ENCODE measurements at regions of chr11 and their contacts with region 1.

Region 1: DNA sequence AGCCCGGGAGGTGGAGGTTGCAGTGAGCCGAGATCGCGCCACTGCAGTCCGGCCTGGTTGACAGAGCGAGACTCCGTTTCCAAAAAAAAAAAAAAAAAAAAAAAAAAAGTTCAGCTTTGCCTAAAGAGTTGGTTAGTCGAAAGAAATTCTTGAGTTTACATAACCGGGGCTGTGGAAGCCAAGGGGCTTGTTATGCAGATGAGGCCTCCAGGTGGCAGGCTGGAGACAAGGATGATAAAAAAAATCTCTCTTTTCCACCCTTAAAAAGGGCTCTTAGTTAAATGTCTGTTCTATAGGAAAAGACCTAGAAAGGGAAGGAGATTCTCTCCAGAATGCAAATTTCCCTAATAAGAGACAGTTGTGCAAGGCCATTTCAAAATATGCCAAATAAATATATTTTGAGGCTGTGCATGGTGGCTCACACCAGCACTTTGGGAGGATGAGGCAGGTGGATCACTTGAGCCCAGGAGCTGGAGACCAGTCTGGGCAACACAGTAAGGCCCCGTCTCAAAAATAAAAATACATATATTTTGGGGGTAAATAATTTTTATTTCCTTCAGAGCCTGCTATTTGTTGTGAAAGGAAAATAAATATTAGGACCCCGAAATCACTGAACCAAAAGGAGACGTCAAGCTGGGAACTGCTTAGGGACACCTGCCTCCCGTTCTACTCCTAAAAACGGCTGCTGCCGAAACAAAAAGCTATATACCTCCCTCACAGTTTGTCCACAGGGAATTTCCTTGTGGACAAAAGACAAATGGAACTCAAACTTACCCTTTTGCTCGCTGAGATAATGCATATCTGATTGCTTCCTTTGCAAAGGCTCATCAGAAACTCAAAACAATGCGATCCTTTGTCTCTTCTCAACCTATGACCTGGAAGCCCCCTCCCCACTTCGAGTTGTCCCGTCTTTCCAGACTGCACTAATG is 2.4 kb upstream of the IFITM2 start:
- DNase-seq: peak; percentile 75
- H3K4me3 ChIP-seq: no peak overlapping the region
- H3K27ac ChIP-seq: peak overlapping the region in 2 of 4 donors; percentile 37 to 39
- H3K4me1 ChIP-seq: peaks cover 11 to 25% (median 12%) of the 10 kb centered on the region in 4 donors
- H3K27me3 ChIP-seq: peaks cover 5% of the 10 kb centered on the region
- CTCF ChIP-seq: peak; percentile 60 to 84 (median 66)
- EP300 ChIP-seq: no peak
- POLR2A ChIP-seq: no peak

Region 2: GRCh38 chr11:250740-251299 is 54.4 kb before region 1 on chr11:
- in situ Hi-C with region 1: no loop called
- intact Hi-C with region 1: no loop called
- DNase-seq: peak; percentile 70
- H3K4me3 ChIP-seq: no peak overlapping the region
- H3K27ac ChIP-seq: no peak overlapping the region
- H3K4me1 ChIP-seq: no peaks in the 10 kb centered on the region
- H3K27me3 ChIP-seq: no peaks in the 10 kb centered on the region
- CTCF ChIP-seq: peak; percentile 54 to 66 (median 63)
- EP300 ChIP-seq: no peak
- POLR2A ChIP-seq: no peak

Region 3: GRCh38 chr11:261624-262023 is 43.6 kb before region 1 on chr11:
- in situ Hi-C with region 1: no loop called
- intact Hi-C with region 1: no loop called
- DNase-seq: no peak
- H3K4me3 ChIP-seq: no peak overlapping the region
- H3K27ac ChIP-seq: no peak overlapping the region
- H3K4me1 ChIP-seq: no peaks in the 10 kb centered on the region
- H3K27me3 ChIP-seq: no peaks in the 10 kb centered on the region
- CTCF ChIP-seq: no peak
- EP300 ChIP-seq: no peak
- POLR2A ChIP-seq: no peak

Region 4: DNA sequence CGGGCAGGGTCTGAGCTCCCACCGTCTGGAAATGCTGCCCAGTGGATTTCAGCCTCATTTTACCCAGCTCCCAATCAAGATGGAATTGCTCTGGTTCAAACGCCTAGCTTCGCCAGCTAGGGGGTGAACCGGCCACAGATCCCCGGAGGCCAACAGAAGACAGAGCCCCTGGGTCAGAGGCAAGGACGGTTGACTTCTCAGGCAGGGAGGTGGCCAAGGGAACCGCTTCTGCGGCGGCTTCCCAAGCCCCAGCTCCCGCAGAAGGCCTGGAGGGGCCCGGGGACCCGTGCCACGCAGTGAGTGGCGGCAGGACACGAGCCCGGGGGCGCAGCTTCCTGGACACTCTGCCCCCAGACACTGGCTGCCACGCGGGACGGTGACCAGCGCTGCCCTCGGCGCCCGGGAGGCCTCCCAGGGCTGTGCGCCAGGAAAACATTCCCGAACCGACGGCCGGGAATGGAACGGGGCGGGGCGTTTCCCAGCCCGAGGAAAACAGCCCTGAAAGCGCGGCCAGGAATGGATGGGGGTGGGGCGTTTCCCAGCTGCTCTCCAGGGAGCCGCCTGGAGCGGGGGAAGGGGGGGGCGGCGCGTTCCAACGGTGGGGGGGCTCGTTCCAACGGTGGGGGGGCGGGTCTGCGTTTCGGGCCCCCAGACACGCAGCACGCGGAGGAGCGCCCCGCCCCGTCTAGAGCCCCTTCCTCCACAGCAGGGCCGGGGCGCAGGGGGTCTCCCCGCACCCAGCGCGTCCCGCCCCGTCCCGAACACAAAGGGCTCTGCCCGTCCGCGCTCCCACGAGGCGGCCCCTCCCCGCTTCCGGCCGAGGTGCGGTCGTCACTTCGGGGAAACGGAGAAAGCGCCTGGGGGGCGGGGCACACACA is 50.6 kb after region 1 on chr11:
- in situ Hi-C with region 1: no loop called
- intact Hi-C with region 1: loop called (anchors 5 kb)
- DNase-seq: peak; percentile 95
- H3K4me3 ChIP-seq: peak overlapping the region; percentile 39 to 57 (median 49)
- H3K27ac ChIP-seq: peak overlapping the region; percentile 91 to 93 (median 92)
- H3K4me1 ChIP-seq: peaks cover 18 to 30% (median 26%) of the 10 kb centered on the region in 4 donors
- H3K27me3 ChIP-seq: no peaks in the 10 kb centered on the region
- CTCF ChIP-seq: no peak
- EP300 ChIP-seq: peak; percentile 83
- POLR2A ChIP-seq: peak; percentile 18

Region 5: GRCh38 chr11:369336-370018 is 64.3 kb after region 1 on chr11 and contains the start of gene B4GALNT4:
- in situ Hi-C with region 1: loop called in 1 of 4 experiments (anchors 5 kb)
- intact Hi-C with region 1: no loop called
- DNase-seq: no peak
- H3K4me3 ChIP-seq: peak within 1 kb of the TSS in 1 of 4 donors; percentile 42
- H3K27ac ChIP-seq: no peak within 1 kb of the TSS
- H3K4me1 ChIP-seq: peaks cover 0 to 10% (median 8%) of the 10 kb centered on the region in 4 donors
- H3K27me3 ChIP-seq: peaks cover 50% of the 10 kb centered on the region
- CTCF ChIP-seq: no peak
- EP300 ChIP-seq: no peak
- POLR2A ChIP-seq: no peak
- total RNA-seq, gene B4GALNT4: 0.82 to 3.0 (median 1.3) TPM in 3 of 4 donors, not detected in the other

Region 6: GRCh38 chr11:737371-737770 is 432.2 kb after region 1 on chr11:
- in situ Hi-C with region 1: no loop called
- intact Hi-C with region 1: no loop called
- DNase-seq: no peak
- H3K4me3 ChIP-seq: no peak overlapping the region
- H3K27ac ChIP-seq: no peak overlapping the region
- H3K4me1 ChIP-seq: peaks cover 0 to 3% (median 0%) of the 10 kb centered on the region in 4 donors
- H3K27me3 ChIP-seq: peaks cover 20% of the 10 kb centered on the region
- CTCF ChIP-seq: no peak
- EP300 ChIP-seq: no peak
- POLR2A ChIP-seq: no peak

Measured in transverse colon (tissue), 4 donors.